ENCODE measurements at regions of chr17 and their contacts with region 1.

Region 1: DNA sequence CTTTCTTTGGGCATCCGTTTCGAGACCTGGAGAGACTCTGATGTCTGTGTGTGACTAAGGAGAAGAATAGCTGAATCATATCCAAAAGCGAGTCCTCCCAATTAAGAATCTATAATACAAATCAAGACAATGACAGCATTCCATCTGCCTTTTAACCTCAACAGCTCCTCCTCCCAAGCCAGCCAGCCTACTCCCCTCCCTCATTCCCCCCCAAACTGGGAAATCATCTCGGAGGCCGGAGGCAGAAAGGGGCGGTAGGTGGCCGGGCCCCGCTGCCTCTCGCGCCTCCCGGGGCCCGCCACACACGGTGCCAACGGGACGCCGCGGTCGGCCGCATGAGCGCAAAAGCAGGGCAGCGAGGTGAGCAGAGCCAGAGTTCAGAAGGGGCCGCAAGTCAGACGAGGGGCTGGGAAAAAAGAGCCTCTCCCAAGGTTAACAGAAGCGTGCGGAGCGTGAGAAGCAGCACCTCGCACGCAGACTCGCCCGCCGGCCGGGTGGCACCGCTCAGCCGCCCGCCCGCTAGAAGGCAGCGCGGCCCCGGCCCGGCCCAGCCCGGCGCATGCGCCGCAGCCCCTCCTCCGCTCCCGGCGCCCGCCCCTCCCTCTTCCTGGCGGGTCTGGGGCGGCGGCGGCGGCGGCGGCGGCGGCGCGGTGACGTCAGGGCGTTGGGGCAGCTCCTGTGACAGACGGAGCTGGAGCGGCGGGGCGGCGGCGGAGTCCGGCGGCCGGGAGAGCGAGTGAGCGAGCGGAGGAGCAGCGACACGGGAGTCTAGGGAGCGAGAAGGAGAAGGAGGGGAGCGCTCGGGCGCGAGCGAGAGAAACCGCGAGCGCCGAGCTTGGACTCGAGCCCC is at the start of gene PAFAH1B1:
- DNase-seq: peak; percentile 91 to 99 (median 95)
- ATAC-seq: peak; percentile 70
- H3K4me3 ChIP-seq: peak within 1 kb of the TSS; percentile 65
- H3K4me3 Mint-ChIP-seq: peak within 1 kb of the TSS; percentile 99
- H3K27ac ChIP-seq: peak within 1 kb of the TSS; percentile 95
- H3K27ac Mint-ChIP-seq: peak within 1 kb of the TSS; percentile 87
- H3K4me1 ChIP-seq: peaks cover 25% of the 10 kb centered on the region
- H3K4me1 Mint-ChIP-seq: peaks cover 38% of the 10 kb centered on the region
- H3K27me3 ChIP-seq: no peaks in the 10 kb centered on the region
- H3K27me3 Mint-ChIP-seq: no peaks in the 10 kb centered on the region
- CTCF ChIP-seq: no peak
- total RNA-seq, gene PAFAH1B1: 120 to 123 TPM

Region 2: DNA sequence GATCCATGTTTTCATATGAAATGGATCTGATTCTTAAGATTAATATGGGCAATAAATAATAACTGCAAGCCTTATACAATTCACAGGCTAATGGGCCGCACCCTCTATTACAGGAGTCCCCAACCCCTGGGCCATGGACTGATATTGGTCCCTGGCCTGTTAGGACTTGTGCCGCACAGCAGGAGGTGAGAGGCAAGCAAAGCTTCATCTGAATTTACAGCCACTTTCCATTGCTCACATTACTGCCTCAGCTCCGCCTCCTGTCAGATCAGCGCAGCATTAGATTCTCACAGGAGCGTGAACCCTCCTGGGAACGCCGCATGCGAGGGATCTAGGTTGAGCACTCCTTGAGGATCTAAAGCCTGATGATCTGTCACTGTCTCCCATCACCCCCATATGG is 108.3 kb before region 1 on chr17:
- CTCF ChIA-PET with region 1: no interaction called
- POLR2A ChIA-PET with region 1: interaction called, 5 read pairs
- intact Hi-C with region 1: loop called in 1 of 2 experiments (anchors 10 kb)
- DNase-seq: no peak
- ATAC-seq: no peak
- H3K4me3 ChIP-seq: no peak overlapping the region
- H3K4me3 Mint-ChIP-seq: no peak overlapping the region
- H3K27ac ChIP-seq: no peak overlapping the region
- H3K27ac Mint-ChIP-seq: no peak overlapping the region
- H3K4me1 ChIP-seq: peaks cover 19% of the 10 kb centered on the region
- H3K4me1 Mint-ChIP-seq: peaks cover 69% of the 10 kb centered on the region
- H3K27me3 ChIP-seq: no peaks in the 10 kb centered on the region
- H3K27me3 Mint-ChIP-seq: no peaks in the 10 kb centered on the region
- CTCF ChIP-seq: no peak

Region 3: GRCh38 chr17:2517539-2517938 is 75.7 kb before region 1 on chr17:
- CTCF ChIA-PET with region 1: no interaction called
- POLR2A ChIA-PET with region 1: interaction called, 46 read pairs
- intact Hi-C with region 1: loop called (anchors 2 to 5 kb)
- DNase-seq: no peak
- ATAC-seq: no peak
- H3K4me3 ChIP-seq: no peak overlapping the region
- H3K4me3 Mint-ChIP-seq: no peak overlapping the region
- H3K27ac ChIP-seq: no peak overlapping the region
- H3K27ac Mint-ChIP-seq: no peak overlapping the region
- H3K4me1 ChIP-seq: peaks cover 3% of the 10 kb centered on the region
- H3K4me1 Mint-ChIP-seq: no peaks in the 10 kb centered on the region
- H3K27me3 ChIP-seq: peaks cover 0 to 2% of the 10 kb centered on the region in 2 experiments
- H3K27me3 Mint-ChIP-seq: no peaks in the 10 kb centered on the region
- CTCF ChIP-seq: no peak

Region 4: DNA sequence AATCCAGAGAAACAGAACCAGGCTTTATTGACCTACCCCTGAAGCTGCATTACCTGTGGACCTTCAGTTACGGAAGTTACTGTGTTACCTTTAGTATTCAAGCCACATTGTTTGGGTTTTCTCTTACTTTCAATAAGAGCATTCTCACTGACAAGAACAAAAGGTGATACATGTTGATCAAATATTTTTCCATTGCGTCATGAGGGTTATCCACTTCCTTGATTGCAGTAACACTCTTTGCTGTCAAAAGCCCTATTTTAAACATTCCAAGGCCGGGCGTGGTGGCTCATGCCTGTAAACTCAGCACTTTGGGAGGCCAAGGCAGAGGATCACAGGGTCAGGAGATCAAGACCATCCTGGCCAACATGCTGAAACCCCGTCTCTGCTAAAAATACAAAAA is 28.3 kb before region 1 on chr17:
- CTCF ChIA-PET with region 1: no interaction called
- POLR2A ChIA-PET with region 1: no interaction called
- intact Hi-C with region 1: no loop called
- DNase-seq: no peak
- ATAC-seq: no peak
- H3K4me3 ChIP-seq: no peak overlapping the region
- H3K4me3 Mint-ChIP-seq: no peak overlapping the region
- H3K27ac ChIP-seq: no peak overlapping the region
- H3K27ac Mint-ChIP-seq: no peak overlapping the region
- H3K4me1 ChIP-seq: peaks cover 4% of the 10 kb centered on the region
- H3K4me1 Mint-ChIP-seq: peaks cover 6% of the 10 kb centered on the region
- H3K27me3 ChIP-seq: no peaks in the 10 kb centered on the region
- H3K27me3 Mint-ChIP-seq: no peaks in the 10 kb centered on the region
- CTCF ChIP-seq: no peak

Region 5: GRCh38 chr17:2672026-2672425 is 78.8 kb after region 1 on chr17:
- CTCF ChIA-PET with region 1: interaction called, 3 read pairs
- POLR2A ChIA-PET with region 1: interaction called, 3 read pairs
- intact Hi-C with region 1: loop called (anchors 1 to 2 kb)
- DNase-seq: no peak
- ATAC-seq: no peak
- H3K4me3 ChIP-seq: no peak overlapping the region
- H3K4me3 Mint-ChIP-seq: no peak overlapping the region
- H3K27ac ChIP-seq: no peak overlapping the region
- H3K27ac Mint-ChIP-seq: no peak overlapping the region
- H3K4me1 ChIP-seq: no peaks in the 10 kb centered on the region
- H3K4me1 Mint-ChIP-seq: peaks cover 10% of the 10 kb centered on the region
- H3K27me3 ChIP-seq: no peaks in the 10 kb centered on the region
- H3K27me3 Mint-ChIP-seq: no peaks in the 10 kb centered on the region
- CTCF ChIP-seq: no peak

Region 6: GRCh38 chr17:2837147-2837561 is 244.0 kb after region 1 on chr17:
- CTCF ChIA-PET with region 1: no interaction called
- POLR2A ChIA-PET with region 1: no interaction called
- intact Hi-C with region 1: loop called in 1 of 2 experiments (anchors 10 kb)
- DNase-seq: peak in 11 of 14 experiments; percentile 14 to 78 (median 43)
- ATAC-seq: peak; percentile 98
- H3K4me3 ChIP-seq: no peak overlapping the region
- H3K4me3 Mint-ChIP-seq: no peak overlapping the region
- H3K27ac ChIP-seq: no peak overlapping the region
- H3K27ac Mint-ChIP-seq: no peak overlapping the region
- H3K4me1 ChIP-seq: peaks cover 7% of the 10 kb centered on the region
- H3K4me1 Mint-ChIP-seq: peaks cover 5% of the 10 kb centered on the region
- H3K27me3 ChIP-seq: no peaks in the 10 kb centered on the region
- H3K27me3 Mint-ChIP-seq: no peaks in the 10 kb centered on the region
- CTCF ChIP-seq: peak; percentile 40

Measured in CD4-positive, alpha-beta T cell (primary cell).